ENCODE measurements at regions of chr22 and their contacts with region 1.

Region 1: DNA sequence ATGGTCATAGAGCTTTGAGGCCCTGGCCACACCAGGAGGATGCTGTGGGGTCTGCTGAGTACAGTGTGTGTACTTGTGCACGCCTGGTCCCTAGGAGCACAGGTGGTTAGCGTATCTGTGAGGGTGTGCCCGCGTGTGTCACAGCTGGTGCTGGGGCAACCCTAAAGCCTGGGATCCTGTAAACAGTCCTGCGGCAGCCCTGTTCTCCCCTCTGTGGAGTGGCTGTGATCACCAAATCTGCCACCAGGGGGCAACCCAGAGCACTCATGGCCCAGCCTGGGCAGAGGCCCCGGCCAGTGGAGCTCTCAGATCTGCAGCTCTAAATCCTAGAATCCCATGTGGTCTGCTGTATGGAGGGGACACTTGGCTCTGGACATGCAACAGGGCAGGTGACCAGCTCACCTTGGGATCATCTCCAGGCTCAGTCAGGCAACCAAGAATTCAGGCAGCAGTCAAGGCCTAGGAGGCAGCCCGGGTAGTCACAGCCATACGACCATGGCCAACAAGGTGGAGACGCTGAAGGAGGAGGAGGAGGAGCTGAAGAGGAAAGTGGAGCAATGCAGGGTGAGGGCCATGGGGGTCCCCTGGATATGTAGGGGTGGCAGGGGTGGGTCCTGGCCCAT is 3.9 kb downstream of the SH3BP1 start:
- DNase-seq: peak; percentile 90
- ATAC-seq: peak; percentile 83
- H3K4me3 ChIP-seq: no peak overlapping the region
- H3K27ac ChIP-seq: no peak overlapping the region
- H3K4me1 ChIP-seq: peaks cover 19% of the 10 kb centered on the region
- H3K27me3 ChIP-seq: no peaks in the 10 kb centered on the region
- CTCF ChIP-seq: peak; percentile 95

Region 2: DNA sequence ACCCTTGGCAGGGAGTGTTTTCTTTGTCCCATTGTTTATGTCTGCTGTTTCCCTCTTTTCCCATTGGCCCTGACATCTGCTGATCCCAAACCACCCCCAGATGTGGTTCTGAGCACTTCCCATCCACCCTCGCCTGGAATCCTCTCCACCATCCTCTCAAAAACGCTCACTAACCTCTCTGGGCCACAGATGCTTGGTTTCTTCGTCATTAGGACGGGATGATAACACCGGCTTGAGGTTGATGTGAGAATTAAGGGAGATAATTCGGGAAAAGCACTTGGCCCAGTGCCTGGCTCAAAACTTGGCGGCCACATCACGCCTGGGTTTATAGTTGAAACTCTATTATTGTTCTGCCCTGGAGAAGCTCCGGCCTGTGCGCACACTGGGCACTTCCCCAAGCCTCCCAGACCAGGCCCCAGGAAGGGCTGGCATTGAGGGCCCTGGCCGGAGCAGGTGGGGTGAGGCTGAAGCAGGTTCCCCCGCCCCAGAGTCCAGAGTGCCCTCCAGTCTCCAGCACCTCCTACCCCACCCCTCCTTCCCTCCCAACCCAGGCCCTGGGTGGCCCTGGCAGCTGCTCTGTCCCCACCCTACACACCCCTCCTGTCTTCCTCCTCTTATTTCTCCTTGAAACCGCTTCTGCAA is 297.4 kb before region 1 on chr22:
- intact Hi-C with region 1: no loop called
- DNase-seq: no peak
- ATAC-seq: no peak
- H3K4me3 ChIP-seq: no peak overlapping the region
- H3K27ac ChIP-seq: no peak overlapping the region
- H3K4me1 ChIP-seq: no peaks in the 10 kb centered on the region
- H3K27me3 ChIP-seq: no peaks in the 10 kb centered on the region
- CTCF ChIP-seq: no peak

Region 3: GRCh38 chr22:37484133-37484824 is 159.1 kb before region 1 on chr22:
- intact Hi-C with region 1: no loop called
- DNase-seq: peak; percentile 91
- ATAC-seq: peak; percentile 78
- H3K4me3 ChIP-seq: peak overlapping the region; percentile 63
- H3K27ac ChIP-seq: peak overlapping the region; percentile 90
- H3K4me1 ChIP-seq: peaks cover 17% of the 10 kb centered on the region
- H3K27me3 ChIP-seq: no peaks in the 10 kb centered on the region
- CTCF ChIP-seq: no peak

Region 4: DNA sequence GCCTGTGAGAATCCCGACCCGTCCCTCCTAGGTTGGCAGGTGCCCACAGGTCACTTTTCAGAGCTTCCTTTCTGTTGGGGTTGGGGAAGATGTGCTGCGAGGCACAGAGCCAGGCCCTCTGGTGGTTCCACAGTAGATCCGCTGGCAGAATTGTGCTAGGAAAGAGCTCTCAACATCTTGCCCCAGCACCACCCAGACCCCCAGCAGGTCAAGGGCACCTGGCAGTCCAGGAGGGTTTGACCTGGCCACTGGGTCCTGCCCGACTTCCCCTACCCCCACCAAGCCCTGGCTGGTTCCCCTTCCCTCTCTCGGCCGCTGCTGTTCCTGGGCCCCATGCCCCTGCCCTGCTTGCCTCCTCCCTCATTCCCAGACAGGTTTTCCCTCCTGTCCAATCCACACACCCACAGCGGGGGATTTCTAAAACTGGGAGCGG is 138.2 kb after region 1 on chr22:
- intact Hi-C with region 1: loop called (anchors 10 kb)
- DNase-seq: no peak
- ATAC-seq: no peak
- H3K4me3 ChIP-seq: no peak overlapping the region
- H3K27ac ChIP-seq: no peak overlapping the region
- H3K4me1 ChIP-seq: no peaks in the 10 kb centered on the region
- H3K27me3 ChIP-seq: no peaks in the 10 kb centered on the region
- CTCF ChIP-seq: no peak

Measured in upper lobe of right lung (tissue), 1 donor.